Activated CD4-positive, alpha-beta memory T cell treated with anti-CD3 and anti-CD28 coated beads, Interleukin-2, amount 10 ng/mL, durations not matched to agents 7 days and 5 days (primary cell): ENCODE measurements at regions of chr15 and their contacts with region 1.

Region 1: DNA sequence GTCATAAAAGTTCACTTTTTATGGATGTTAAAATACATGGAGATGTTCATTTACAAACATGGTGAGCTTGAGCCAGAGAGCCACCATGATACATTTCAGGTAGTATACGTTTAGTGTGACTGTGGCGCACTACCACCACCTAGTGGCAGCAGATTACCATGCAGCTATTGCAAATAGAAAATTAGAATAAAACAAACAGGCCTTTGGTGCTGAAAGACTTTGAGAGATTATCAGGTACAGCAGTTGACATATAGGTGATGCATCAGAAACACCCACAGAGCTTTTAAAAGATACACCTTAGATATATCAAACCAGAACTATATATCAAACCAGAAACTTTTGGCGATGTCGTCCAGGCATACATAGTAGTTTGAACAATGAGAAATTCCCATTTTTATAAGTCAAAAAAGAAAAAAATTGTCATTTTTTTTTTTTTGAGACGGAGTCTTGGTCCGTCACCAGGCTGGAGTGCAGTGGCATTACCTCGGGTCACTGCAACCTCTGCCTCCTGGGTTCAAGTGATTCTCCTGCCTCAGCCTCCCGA is 42.0 kb upstream of the ICE2 start:
- DNase-seq: peak; percentile 84
- H3K4me3 Mint-ChIP-seq: no peak overlapping the region
- H3K27ac Mint-ChIP-seq: peak overlapping the region; percentile 61
- H3K4me1 Mint-ChIP-seq: peaks cover 62% of the 10 kb centered on the region
- H3K27me3 Mint-ChIP-seq: no peaks in the 10 kb centered on the region

Region 2: GRCh38 chr15:60362321-60363086 is 158.4 kb before region 1 on chr15:
- CTCF ChIA-PET with region 1: interaction called, 34 read pairs
- POLR2A ChIA-PET with region 1: interaction called, 8 read pairs
- DNase-seq: peak; percentile 62
- H3K4me3 Mint-ChIP-seq: no peak overlapping the region
- H3K27ac Mint-ChIP-seq: peak overlapping the region; percentile 80
- H3K4me1 Mint-ChIP-seq: peaks cover 47% of the 10 kb centered on the region
- H3K27me3 Mint-ChIP-seq: no peaks in the 10 kb centered on the region

Region 3: GRCh38 chr15:60507596-60508424 is 13.1 kb before region 1 on chr15:
- CTCF ChIA-PET with region 1: interaction called, 85 read pairs
- POLR2A ChIA-PET with region 1: interaction called, 30 read pairs
- DNase-seq: peak; percentile 61
- H3K4me3 Mint-ChIP-seq: peak overlapping the region; percentile 18
- H3K27ac Mint-ChIP-seq: peak overlapping the region; percentile 67
- H3K4me1 Mint-ChIP-seq: peaks cover 55% of the 10 kb centered on the region
- H3K27me3 Mint-ChIP-seq: no peaks in the 10 kb centered on the region

Region 4: GRCh38 chr15:60548101-60548500 is 27.2 kb after region 1 on chr15:
- CTCF ChIA-PET with region 1: interaction called, 55 read pairs
- POLR2A ChIA-PET with region 1: interaction called, 21 read pairs
- DNase-seq: peak; percentile 60
- H3K4me3 Mint-ChIP-seq: peak overlapping the region; percentile 65
- H3K27ac Mint-ChIP-seq: peak overlapping the region; percentile 95
- H3K4me1 Mint-ChIP-seq: peaks cover 96% of the 10 kb centered on the region
- H3K27me3 Mint-ChIP-seq: no peaks in the 10 kb centered on the region

Region 5: GRCh38 chr15:60585743-60586708 is 65.1 kb after region 1 on chr15:
- CTCF ChIA-PET with region 1: interaction called, 28 read pairs
- POLR2A ChIA-PET with region 1: interaction called, 24 read pairs
- DNase-seq: peak; percentile 66
- H3K4me3 Mint-ChIP-seq: peak overlapping the region; percentile 69
- H3K27ac Mint-ChIP-seq: peak overlapping the region; percentile 96
- H3K4me1 Mint-ChIP-seq: peaks cover 87% of the 10 kb centered on the region
- H3K27me3 Mint-ChIP-seq: no peaks in the 10 kb centered on the region